SK-N-SH (cell line): ENCODE measurements at regions of chrX and their contacts with region 1.

Region 1: DNA sequence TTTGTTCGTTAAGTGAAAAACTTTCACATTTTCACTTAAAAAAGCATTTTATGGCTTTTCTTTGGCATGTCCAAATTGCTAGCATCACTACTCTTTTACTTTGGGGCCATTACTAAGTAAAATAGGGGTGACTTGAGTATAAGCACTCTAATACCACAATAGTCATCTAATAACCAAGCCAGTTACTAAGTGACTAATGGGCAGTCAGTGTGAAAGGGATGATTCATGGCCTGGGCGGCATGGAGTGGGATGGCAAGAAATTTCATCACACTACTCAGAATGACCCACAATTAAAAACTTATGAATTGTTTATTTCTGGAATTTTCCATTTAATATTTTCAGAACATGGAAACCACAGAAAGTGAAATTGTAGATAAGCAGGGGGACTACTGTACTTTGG is 60.9 kb downstream of the BMP15 start:
- DNase-seq: no peak
- H3K4me3 ChIP-seq: no peak overlapping the region
- H3K27ac ChIP-seq: no peak overlapping the region
- H3K4me1 ChIP-seq: no peaks in the 10 kb centered on the region
- H3K27me3 ChIP-seq: no peaks in the 10 kb centered on the region
- CTCF ChIP-seq: no peak
- EP300 ChIP-seq: no peak
- RAD21 ChIP-seq: no peak

Region 2: DNA sequence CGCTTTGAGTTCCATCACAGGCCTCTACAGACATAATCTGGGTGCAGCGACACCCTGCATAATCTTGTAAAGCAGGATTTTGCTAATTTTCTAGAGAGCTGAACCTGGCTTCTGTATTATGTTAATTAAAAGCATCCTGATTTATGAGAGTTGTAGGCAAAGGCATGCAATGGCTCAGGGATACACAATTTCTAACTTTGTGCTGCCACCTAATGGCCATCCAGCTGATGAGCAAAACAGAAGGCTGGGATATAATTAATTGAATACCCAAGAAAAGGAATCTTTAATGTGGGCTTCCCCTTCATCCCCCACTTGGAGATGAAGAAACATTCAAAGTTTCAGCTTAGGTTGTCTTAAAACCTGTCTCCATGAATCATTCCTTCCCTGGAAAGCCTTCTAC is 17.3 kb after region 1 on chrX:
- CTCF ChIA-PET with region 1: interaction called, 10 read pairs
- POLR2A ChIA-PET with region 1: no interaction called
- DNase-seq: peak; percentile 29
- H3K4me3 ChIP-seq: no peak overlapping the region
- H3K27ac ChIP-seq: no peak overlapping the region
- H3K4me1 ChIP-seq: no peaks in the 10 kb centered on the region
- H3K27me3 ChIP-seq: peaks cover 10% of the 10 kb centered on the region; the same call in 1 of the 2 replicates
- CTCF ChIP-seq: peak; percentile 74
- EP300 ChIP-seq: no peak
- RAD21 ChIP-seq: peak; percentile 66